GM12878 (cell line): ENCODE measurements at regions of chr10 and their contacts with region 1.

Region 1: GRCh38 chr10:22723343-22723779 is 9.0 kb upstream of the PIP4K2A start:
- DNase-seq: peak; percentile 78
- ATAC-seq: peak; percentile 84
- H3K4me3 ChIP-seq: 0 out of 2 replicates have a peak overlapping the region, but pooled peaks have one; percentile 6
- H3K27ac ChIP-seq: peak overlapping the region; percentile 71
- H3K4me1 ChIP-seq: peaks cover 22% of the 10 kb centered on the region
- H3K27me3 ChIP-seq: no peaks in the 10 kb centered on the region
- CTCF ChIP-seq: no peak
- EP300 ChIP-seq: peak; percentile 78 to 99; a peak in 3 of 4 replicates
- POLR2A ChIP-seq: no peak
- RAD21 ChIP-seq: no peak

Region 2: DNA sequence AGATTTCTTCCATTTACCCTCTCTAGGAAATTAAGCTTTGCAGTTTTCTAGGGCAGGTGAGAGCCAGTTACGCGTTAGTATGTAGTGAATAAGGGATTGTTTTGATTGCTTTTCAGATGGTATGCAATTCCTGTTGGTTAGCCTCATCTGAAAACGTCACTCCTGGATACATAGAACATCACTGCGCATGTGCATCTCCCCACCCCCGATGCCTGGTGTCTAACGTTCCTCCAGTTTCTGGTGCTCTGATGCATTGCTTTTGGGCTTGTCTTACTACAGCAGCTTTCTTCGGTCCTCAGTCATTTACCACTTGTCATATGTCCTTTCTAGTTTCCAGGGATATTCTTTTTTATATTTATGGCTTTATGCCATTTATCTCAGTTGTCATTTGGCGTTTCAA is 1166.8 kb before region 1 on chr10:
- CTCF ChIA-PET with region 1: no interaction called
- POLR2A ChIA-PET with region 1: no interaction called
- RAD21 ChIA-PET with region 1: no interaction called
- SMC1A ChIA-PET with region 1: no interaction called
- in situ Hi-C with region 1: no loop called
- intact Hi-C with region 1: no loop called
- DNase-seq: no peak
- ATAC-seq: no peak
- H3K4me3 ChIP-seq: no peak overlapping the region
- H3K27ac ChIP-seq: no peak overlapping the region
- H3K4me1 ChIP-seq: no peaks in the 10 kb centered on the region
- H3K27me3 ChIP-seq: no peaks in the 10 kb centered on the region
- CTCF ChIP-seq: no peak
- EP300 ChIP-seq: no peak
- POLR2A ChIP-seq: no peak
- RAD21 ChIP-seq: no peak

Region 3: DNA sequence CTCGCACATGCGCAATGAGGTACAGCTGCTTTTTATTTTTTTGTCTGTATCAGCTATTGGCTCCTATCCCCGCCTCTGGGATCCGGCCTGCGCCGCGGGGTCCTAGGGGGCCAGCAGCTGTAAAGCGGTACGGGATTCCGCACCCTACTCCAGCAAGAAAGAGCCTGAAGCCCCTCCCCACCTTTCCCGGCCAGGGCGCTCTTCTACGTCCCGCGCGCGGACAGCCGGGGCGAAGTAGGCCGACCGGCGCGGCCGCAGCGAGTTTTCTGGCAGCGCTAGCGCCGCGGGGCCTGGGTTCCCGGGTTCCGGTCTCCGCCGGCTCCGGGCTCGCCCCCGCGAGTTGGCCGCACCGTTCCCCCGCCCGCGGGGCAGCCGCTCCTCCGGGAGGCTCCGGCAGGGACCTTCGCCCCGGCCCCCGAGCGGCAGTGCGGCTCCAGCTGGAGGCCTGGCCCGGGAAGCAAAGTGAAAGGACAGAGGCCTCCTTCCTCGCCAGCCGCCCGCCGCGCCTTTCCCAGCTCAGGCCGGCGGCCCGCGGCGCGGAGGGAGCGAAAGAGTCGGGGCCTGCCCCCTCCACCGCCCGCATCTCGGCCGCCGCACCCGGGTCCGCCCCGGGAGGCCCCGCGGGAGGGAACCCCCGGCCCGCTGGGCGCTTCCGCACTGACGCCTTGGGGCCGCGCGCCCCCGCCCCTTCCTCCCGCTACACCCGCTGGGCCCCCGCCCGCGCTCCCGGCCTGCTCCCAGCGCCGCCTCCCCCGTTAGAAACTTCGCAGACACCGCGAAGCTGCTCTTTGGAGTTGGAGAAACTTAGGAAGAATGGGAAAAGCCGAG is 382.8 kb before region 1 on chr10:
- CTCF ChIA-PET with region 1: no interaction called
- POLR2A ChIA-PET with region 1: no interaction called
- RAD21 ChIA-PET with region 1: no interaction called
- SMC1A ChIA-PET with region 1: no interaction called
- in situ Hi-C with region 1: no loop called
- intact Hi-C with region 1: loop called (anchors 5 kb)
- DNase-seq: peak; percentile 69
- ATAC-seq: peak; percentile 79
- H3K4me3 ChIP-seq: peak overlapping the region; percentile 66
- H3K27ac ChIP-seq: peak overlapping the region; percentile 77
- H3K4me1 ChIP-seq: peaks cover 24% of the 10 kb centered on the region
- H3K27me3 ChIP-seq: peaks cover 11 to 33% of the 10 kb centered on the region in 2 experiments
- CTCF ChIP-seq: no peak
- EP300 ChIP-seq: 0 out of 4 replicates have a peak, but pooled peaks of 1 of the 2 experiments have one; percentile 16
- POLR2A ChIP-seq: no peak; the same call in none of the 2 replicates
- RAD21 ChIP-seq: no peak

Region 4: DNA sequence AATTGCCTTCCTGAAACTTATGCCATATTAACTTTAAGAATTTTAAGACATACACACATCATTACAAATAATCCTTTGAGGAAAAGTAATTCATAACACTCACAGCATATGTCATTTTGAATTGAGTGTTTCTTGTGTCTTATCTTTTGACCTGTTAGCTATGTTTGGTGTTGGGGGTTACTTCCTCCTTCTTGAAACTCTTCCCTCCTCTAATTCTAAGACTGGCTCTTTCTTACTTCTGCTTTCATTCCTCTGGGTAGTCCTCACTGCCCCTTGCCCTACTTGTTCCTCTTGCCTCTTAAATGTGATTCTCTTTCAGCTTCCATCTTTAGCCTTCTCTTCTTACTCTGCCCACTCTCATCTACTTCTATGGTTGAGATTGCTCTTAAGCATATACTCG is 19.3 kb after region 1 on chr10:
- CTCF ChIA-PET with region 1: interaction called, 20 read pairs
- POLR2A ChIA-PET with region 1: interaction called, 11 read pairs
- RAD21 ChIA-PET with region 1: interaction called, 7 read pairs
- SMC1A ChIA-PET with region 1: interaction called, 8 read pairs
- in situ Hi-C with region 1: no loop called
- intact Hi-C with region 1: no loop called
- DNase-seq: peak; percentile 48
- ATAC-seq: peak; percentile 100
- H3K4me3 ChIP-seq: no peak overlapping the region
- H3K27ac ChIP-seq: peak overlapping the region; percentile 30; the same call in 1 of the 2 replicates
- H3K4me1 ChIP-seq: peaks cover 10% of the 10 kb centered on the region
- H3K27me3 ChIP-seq: no peaks in the 10 kb centered on the region
- CTCF ChIP-seq: no peak
- EP300 ChIP-seq: no peak
- POLR2A ChIP-seq: no peak
- RAD21 ChIP-seq: no peak

Region 5: DNA sequence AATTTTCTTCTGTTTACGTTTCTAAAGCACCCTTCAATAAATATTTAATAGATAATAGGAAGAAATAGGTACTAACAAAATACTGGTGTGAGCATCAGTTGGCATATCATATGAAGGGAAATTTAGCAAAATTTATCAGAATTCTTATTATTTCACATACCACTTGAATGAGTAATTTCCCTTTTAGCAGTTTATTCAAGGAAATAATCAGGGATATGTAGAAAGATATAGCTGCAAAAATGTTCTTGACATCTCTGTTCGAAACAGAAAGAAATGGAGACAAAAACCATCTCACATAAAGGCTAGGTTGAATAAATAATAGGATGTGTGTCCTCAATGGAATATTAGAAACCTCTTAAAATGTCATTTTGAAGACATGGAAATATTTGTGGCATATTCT is 26.8 kb after region 1 on chr10:
- CTCF ChIA-PET with region 1: interaction called, 7 read pairs
- POLR2A ChIA-PET with region 1: no interaction called
- RAD21 ChIA-PET with region 1: interaction called, 5 read pairs
- SMC1A ChIA-PET with region 1: interaction called, 21 read pairs
- in situ Hi-C with region 1: no loop called
- intact Hi-C with region 1: no loop called
- DNase-seq: no peak
- ATAC-seq: no peak
- H3K4me3 ChIP-seq: no peak overlapping the region
- H3K27ac ChIP-seq: no peak overlapping the region
- H3K4me1 ChIP-seq: no peaks in the 10 kb centered on the region
- H3K27me3 ChIP-seq: no peaks in the 10 kb centered on the region
- CTCF ChIP-seq: no peak
- EP300 ChIP-seq: no peak
- POLR2A ChIP-seq: no peak
- RAD21 ChIP-seq: no peak

Region 6: DNA sequence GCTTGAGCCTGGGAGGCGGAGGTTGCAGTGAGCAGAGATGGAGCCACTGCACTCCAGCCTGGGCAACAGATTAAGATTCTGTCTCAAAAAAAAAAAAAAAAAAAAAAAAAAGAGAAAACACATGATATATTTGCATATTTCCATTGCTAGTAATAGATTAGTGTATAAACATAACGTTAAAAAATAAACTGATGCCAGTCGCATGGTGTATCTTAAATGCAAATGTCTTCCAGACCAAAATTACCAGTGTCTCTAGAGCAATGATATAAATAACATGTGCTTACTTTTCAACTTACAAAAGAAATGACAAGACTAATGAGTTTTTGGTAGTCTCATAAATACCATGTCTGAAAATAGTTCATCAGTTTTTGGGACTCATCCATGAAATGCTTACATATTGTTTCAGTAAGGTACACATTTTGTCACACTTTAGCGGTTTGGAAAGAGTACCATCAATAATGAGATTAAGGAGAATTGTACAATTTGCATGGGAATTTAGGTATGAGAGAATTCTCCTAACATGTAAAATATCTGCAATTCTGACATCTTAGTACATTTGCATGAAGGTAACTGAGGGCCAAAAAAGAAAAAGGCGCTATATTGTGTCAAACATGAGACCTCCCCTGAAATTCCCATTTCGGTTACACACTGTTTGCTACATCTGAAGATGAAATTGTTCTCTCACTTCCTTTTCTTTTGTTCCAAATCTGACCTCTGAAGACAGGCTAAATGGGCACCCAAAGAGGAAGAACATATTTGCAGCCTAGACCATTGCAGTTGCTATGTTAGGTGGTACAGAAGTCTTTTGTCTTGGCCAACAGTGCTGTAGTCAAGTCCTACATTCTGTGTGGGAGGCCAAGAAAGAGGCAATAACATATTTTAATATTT is 42.5 kb after region 1 on chr10:
- CTCF ChIA-PET with region 1: interaction called, 4 read pairs
- POLR2A ChIA-PET with region 1: interaction called, 8 read pairs
- RAD21 ChIA-PET with region 1: interaction called, 6 read pairs
- SMC1A ChIA-PET with region 1: interaction called, 18 read pairs
- in situ Hi-C with region 1: no loop called
- intact Hi-C with region 1: no loop called
- DNase-seq: peak; percentile 80
- ATAC-seq: peak; percentile 91
- H3K4me3 ChIP-seq: no peak overlapping the region
- H3K27ac ChIP-seq: peak overlapping the region; percentile 65
- H3K4me1 ChIP-seq: peaks cover 32% of the 10 kb centered on the region
- H3K27me3 ChIP-seq: no peaks in the 10 kb centered on the region
- CTCF ChIP-seq: no peak
- EP300 ChIP-seq: peak; percentile 66 to 83; a peak in 3 of 4 replicates
- POLR2A ChIP-seq: no peak
- RAD21 ChIP-seq: peak; percentile 2; the same call in 1 of the 2 replicates

Region 7: GRCh38 chr10:22823109-22823508 is 99.7 kb after region 1 on chr10:
- CTCF ChIA-PET with region 1: no interaction called
- POLR2A ChIA-PET with region 1: no interaction called
- RAD21 ChIA-PET with region 1: no interaction called
- SMC1A ChIA-PET with region 1: no interaction called
- in situ Hi-C with region 1: no loop called
- intact Hi-C with region 1: no loop called
- DNase-seq: peak; percentile 23
- ATAC-seq: peak; percentile 97
- H3K4me3 ChIP-seq: no peak overlapping the region
- H3K27ac ChIP-seq: no peak overlapping the region
- H3K4me1 ChIP-seq: no peaks in the 10 kb centered on the region
- H3K27me3 ChIP-seq: no peaks in the 10 kb centered on the region
- CTCF ChIP-seq: no peak
- EP300 ChIP-seq: no peak
- POLR2A ChIP-seq: no peak
- RAD21 ChIP-seq: no peak